Activated CD8-positive, alpha-beta T cell treated with anti-CD3 and anti-CD28 coated beads, Interleukin-2, amount 10 ng/mL, durations not matched to agents 7 days and 5 days (primary cell): ENCODE measurements at regions of chr12 and their contacts with region 1.

Region 1: DNA sequence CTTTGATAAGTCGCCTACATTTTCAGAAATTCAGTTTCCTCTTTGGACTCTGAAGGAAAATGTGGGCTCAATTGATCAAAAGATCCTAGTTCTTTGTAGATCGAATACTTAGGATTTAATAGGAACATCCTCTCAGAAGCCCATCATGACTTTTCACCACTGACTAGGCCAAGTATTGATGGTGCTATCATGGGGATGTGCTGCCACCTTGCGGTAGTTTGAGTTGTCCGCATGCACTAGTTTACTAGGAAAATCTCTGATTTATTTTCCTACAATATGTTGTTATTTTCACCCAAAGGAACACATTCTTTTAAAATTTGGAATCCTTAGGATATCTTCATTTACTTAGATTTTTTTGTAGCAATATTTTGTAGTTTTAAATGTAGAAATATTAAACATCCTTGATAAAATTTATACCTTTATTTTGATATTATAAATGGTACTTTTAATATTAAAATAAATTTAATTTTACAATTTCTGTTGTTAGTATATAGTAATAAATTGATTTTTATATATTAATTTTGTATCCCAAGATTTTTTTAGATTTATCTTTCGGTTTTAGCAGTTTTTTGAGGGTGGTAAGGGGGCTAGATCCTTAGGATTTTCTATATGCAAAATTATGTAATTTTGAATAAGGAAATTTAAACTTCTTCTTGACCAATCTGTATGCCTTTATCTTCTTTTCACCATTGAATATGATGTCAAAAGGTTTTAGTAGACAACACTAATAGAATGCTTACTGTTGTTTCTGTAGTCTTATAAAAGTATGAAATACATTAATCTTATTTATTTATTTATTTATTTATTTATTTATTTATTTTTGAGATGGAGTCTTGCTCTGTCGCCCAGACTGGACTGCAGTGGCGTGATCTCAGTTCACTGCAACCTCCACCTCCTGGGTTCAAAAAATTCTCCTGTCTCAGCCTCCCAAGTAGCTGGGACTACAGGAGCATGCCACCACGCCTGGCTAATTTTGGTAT is 52.9 kb upstream of the OR9K2 start:
- DNase-seq: peak; percentile 87
- ATAC-seq: peak; percentile 65
- H3K4me3 Mint-ChIP-seq: no peak overlapping the region
- H3K27ac Mint-ChIP-seq: no peak overlapping the region
- H3K4me1 Mint-ChIP-seq: peaks cover 7% of the 10 kb centered on the region
- H3K27me3 Mint-ChIP-seq: peaks cover 29% of the 10 kb centered on the region

Region 2: DNA sequence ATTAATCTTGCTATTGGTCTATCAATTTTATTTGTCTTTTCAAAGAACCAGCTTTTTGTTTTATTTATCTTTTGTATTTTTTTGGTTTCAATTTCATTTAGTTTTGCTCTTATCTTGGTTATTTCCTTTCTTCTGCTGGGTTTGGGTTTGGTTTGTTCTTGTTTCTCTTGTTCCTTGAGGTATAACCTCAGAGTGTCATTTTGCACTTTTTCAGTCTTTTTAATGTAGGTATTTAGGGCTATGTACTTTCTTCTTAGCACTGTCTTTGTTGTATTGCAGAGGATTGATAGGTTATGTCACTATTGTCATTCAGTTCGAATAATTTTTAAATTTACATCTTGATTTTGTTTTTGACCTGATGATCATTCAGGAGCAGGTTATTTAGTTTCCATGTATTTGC is 332.5 kb before region 1 on chr12:
- CTCF ChIA-PET with region 1: interaction called, 12 read pairs
- POLR2A ChIA-PET with region 1: no interaction called
- DNase-seq: no peak
- ATAC-seq: peak; percentile 80
- H3K4me3 Mint-ChIP-seq: peak overlapping the region; percentile 32
- H3K27ac Mint-ChIP-seq: peak overlapping the region; percentile 80
- H3K4me1 Mint-ChIP-seq: peaks cover 74% of the 10 kb centered on the region
- H3K27me3 Mint-ChIP-seq: peaks cover 3% of the 10 kb centered on the region

Region 3: GRCh38 chr12:54853995-54854566 is 219.3 kb before region 1 on chr12 and contains the start of gene MUCL1:
- CTCF ChIA-PET with region 1: interaction called, 47 read pairs
- POLR2A ChIA-PET with region 1: no interaction called
- DNase-seq: peak; percentile 87
- ATAC-seq: peak; percentile 99
- H3K4me3 Mint-ChIP-seq: no peak within 1 kb of the TSS
- H3K27ac Mint-ChIP-seq: no peak within 1 kb of the TSS
- H3K4me1 Mint-ChIP-seq: peaks cover 13% of the 10 kb centered on the region
- H3K27me3 Mint-ChIP-seq: no peaks in the 10 kb centered on the region
- total RNA-seq, gene MUCL1: not detected

Region 4: DNA sequence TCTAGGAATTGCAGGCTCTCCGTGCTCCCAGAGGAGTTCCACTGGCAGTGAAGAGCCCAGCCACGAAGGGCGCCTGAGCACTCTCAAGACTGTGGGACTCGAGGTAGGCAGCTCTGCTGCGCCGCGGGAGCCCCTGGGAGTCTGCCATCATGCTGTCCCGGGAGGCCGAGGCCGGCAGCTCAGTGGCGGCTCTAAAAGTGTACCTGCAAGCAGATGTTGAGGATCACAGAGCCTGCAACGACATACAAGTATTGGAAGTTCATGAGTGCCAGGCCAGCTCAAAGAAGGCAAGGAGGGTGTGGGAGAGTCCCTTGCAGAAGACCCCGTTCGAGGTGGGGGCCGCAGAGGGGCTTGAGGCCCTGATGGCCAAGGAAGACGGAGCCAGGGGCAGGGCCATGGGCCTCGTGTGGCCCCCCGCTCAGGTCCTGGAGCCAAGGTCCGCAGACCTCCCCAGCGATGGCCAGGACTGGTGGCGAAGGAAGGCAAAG is 156.3 kb before region 1 on chr12:
- CTCF ChIA-PET with region 1: no interaction called
- POLR2A ChIA-PET with region 1: no interaction called
- DNase-seq: no peak
- ATAC-seq: no peak
- H3K4me3 Mint-ChIP-seq: no peak overlapping the region
- H3K27ac Mint-ChIP-seq: no peak overlapping the region
- H3K4me1 Mint-ChIP-seq: no peaks in the 10 kb centered on the region
- H3K27me3 Mint-ChIP-seq: no peaks in the 10 kb centered on the region

Region 5: DNA sequence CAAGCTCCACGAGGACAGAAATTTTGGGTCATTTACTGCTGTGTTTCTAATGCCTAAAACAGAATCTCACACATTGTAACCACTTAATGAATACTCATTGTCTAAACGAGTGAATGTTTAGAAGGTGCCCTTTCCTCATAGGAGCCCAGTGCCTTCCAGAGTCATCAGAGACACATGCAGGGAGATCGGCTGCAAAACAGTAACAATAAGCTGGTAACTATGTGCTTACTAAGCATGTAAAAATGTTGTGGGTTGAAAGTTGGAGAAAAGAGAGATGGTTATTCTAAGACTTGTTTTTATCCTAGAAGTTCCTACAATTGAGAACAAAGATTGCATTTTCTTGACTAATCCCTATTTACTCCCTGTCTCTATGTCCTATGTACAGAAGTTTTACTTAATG is 96.2 kb before region 1 on chr12:
- CTCF ChIA-PET with region 1: interaction called, 117 read pairs
- POLR2A ChIA-PET with region 1: no interaction called
- DNase-seq: no peak
- ATAC-seq: no peak
- H3K4me3 Mint-ChIP-seq: peak overlapping the region; percentile 70
- H3K27ac Mint-ChIP-seq: peak overlapping the region; percentile 79
- H3K4me1 Mint-ChIP-seq: peaks cover 84% of the 10 kb centered on the region
- H3K27me3 Mint-ChIP-seq: no peaks in the 10 kb centered on the region

Region 6: GRCh38 chr12:55037351-55037987 is 35.9 kb before region 1 on chr12:
- CTCF ChIA-PET with region 1: interaction called, 19 read pairs
- POLR2A ChIA-PET with region 1: no interaction called
- DNase-seq: no peak
- ATAC-seq: no peak
- H3K4me3 Mint-ChIP-seq: no peak overlapping the region
- H3K27ac Mint-ChIP-seq: peak overlapping the region; percentile 10
- H3K4me1 Mint-ChIP-seq: peaks cover 28% of the 10 kb centered on the region
- H3K27me3 Mint-ChIP-seq: peaks cover 2% of the 10 kb centered on the region